ENCODE measurements at regions of chr3 and their contacts with region 1.

Region 1: DNA sequence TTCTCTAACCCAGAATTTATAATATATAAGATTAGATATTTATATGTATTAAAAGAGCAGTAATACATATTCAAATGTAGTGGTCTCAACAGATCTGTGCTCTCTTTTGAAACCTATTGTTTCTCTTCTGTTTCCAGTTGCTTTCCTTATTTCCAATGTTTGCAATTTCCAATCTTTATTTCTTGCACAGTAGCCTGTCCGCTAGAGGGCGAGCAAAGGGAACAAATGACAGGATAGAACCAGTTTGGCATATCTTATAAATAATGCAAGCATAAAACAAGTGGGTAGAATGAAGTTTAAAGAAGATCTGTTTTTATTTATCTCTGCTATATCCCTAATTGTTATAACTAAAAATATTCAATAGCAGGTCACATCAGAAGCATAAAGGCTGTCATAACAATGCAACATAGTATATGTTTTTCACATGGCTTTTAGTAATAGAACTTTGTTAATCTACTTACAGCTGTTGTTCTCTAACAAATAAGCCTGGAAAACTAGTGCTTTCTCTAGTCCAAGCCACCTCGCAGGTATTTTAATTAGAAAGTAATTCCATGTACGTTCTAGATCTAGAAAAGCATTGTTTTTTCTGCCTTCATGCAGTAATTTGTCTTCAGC is 15.1 kb upstream of the TCAIM start:
- DNase-seq: peak in 1 of 2 experiments; percentile 54
- H3K4me3 ChIP-seq: no peak overlapping the region
- H3K27ac ChIP-seq: no peak overlapping the region
- H3K4me1 ChIP-seq: no peaks in the 10 kb centered on the region
- H3K27me3 ChIP-seq: no peaks in the 10 kb centered on the region
- CTCF ChIP-seq: peak in 2 of 3 experiments; percentile 65 to 67; a peak in 2 of 4 replicates
- EP300 ChIP-seq: no peak
- POLR2A ChIP-seq: no peak
- RAD21 ChIP-seq: peak; percentile 84 to 85

Region 2: DNA sequence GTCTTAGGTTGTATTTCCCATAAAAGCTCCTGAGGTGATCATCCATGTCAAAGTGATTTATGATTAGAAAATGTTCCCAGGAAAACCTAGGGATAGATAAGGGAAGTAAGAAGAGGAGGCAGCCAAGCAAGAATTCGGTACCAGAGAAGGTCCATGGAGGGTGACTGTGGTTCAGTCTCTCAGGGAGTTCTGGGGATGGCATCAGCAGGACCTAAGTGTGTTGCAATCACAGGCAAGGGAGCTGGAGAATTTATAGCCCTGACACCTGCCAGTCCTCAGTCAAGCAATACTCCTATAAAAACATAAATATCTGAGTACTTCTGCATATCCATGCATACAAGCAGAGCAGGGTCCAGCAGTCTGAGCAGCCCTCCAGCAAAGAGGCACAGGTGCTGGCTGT is 177.4 kb before region 1 on chr3:
- CTCF ChIA-PET with region 1: no interaction called
- POLR2A ChIA-PET with region 1: no interaction called
- DNase-seq: no peak
- H3K4me3 ChIP-seq: no peak overlapping the region
- H3K27ac ChIP-seq: no peak overlapping the region
- H3K4me1 ChIP-seq: no peaks in the 10 kb centered on the region
- H3K27me3 ChIP-seq: no peaks in the 10 kb centered on the region
- CTCF ChIP-seq: no peak
- EP300 ChIP-seq: no peak
- POLR2A ChIP-seq: no peak
- RAD21 ChIP-seq: no peak

Region 3: GRCh38 chr3:44338010-44338827 is 14.8 kb after region 1 on chr3 and contains the start of gene TCAIM:
- CTCF ChIA-PET with region 1: interaction called, 20 read pairs
- POLR2A ChIA-PET with region 1: interaction called, 3 read pairs
- DNase-seq: peak; percentile 98
- H3K4me3 ChIP-seq: peak within 1 kb of the TSS; percentile 58 to 80 (median 71)
- H3K27ac ChIP-seq: peak within 1 kb of the TSS; percentile 95
- H3K4me1 ChIP-seq: peaks cover 0 to 6% (median 3%) of the 10 kb centered on the region in 4 experiments; a peak in 4 of 7 replicates
- H3K27me3 ChIP-seq: no peaks in the 10 kb centered on the region
- CTCF ChIP-seq: no peak
- EP300 ChIP-seq: peak in 1 of 2 experiments; percentile 28; a peak in 1 of 3 replicates
- POLR2A ChIP-seq: peak; percentile 86 to 89
- RAD21 ChIP-seq: no peak
- total RNA-seq, gene TCAIM: 21.7 and 22.1 TPM in 2 replicates

Region 4: GRCh38 chr3:44418549-44418948 is 95.1 kb after region 1 on chr3:
- CTCF ChIA-PET with region 1: interaction called, 11 read pairs
- POLR2A ChIA-PET with region 1: no interaction called
- DNase-seq: peak in 1 of 2 experiments; percentile 79
- H3K4me3 ChIP-seq: no peak overlapping the region
- H3K27ac ChIP-seq: no peak overlapping the region
- H3K4me1 ChIP-seq: peaks cover 0 to 3% (median 2%) of the 10 kb centered on the region in 4 experiments; a peak in 3 of 7 replicates
- H3K27me3 ChIP-seq: no peaks in the 10 kb centered on the region
- CTCF ChIP-seq: peak; percentile 42 to 75 (median 62)
- EP300 ChIP-seq: no peak
- POLR2A ChIP-seq: no peak
- RAD21 ChIP-seq: peak; percentile 27 to 38; a peak in 3 of 4 replicates

Measured in H1 (cell line).